Activated CD8-positive, alpha-beta T cell treated with anti-CD3 and anti-CD28 coated beads, Interleukin-2, amount 10 ng/mL, durations not matched to agents 7 days and 5 days (primary cell): ENCODE measurements at regions of chr5 and their contacts with region 1.

Region 1: GRCh38 chr5:87780831-87781760 is 368.4 kb upstream of the CCNH start:
- DNase-seq: peak; percentile 85
- ATAC-seq: peak; percentile 100
- H3K4me3 Mint-ChIP-seq: no peak overlapping the region
- H3K27ac Mint-ChIP-seq: no peak overlapping the region
- H3K4me1 Mint-ChIP-seq: no peaks in the 10 kb centered on the region
- H3K27me3 Mint-ChIP-seq: peaks cover 7% of the 10 kb centered on the region

Region 2: DNA sequence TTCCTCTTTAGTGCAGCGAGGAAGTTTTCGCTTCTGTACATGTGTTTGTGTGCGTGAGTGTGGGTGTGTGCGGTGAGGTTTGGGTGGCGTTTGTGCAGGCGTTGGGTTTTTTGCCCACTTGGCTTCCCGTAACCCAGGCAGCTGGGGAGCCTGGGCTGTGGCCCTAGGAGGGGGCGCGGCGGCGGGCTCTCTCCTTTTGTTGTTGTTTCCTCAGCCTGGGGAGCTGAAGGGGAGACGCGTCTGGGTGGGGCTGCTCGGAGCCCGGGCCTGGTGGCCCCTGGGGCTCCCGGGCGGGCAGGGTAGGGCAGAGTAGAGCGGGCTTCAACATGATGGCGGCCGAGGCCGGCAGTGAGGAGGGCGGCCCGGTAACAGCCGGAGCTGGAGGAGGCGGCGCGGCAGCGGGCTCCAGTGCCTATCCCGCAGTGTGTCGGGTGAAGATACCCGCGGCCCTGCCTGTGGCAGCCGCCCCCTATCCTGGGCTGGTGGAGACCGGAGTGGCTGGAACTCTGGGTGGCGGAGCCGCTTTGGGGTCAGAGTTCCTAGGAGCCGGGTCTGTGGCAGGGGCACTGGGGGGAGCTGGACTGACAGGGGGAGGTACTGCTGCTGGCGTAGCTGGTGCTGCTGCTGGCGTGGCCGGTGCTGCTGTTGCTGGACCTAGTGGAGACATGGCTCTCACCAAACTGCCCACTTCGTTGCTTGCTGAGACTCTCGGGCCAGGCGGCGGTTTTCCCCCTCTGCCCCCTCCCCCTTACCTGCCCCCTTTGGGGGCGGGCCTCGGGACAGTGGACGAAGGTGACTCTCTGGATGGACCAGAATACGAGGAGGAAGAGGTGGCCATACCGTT is 512.7 kb before region 1 on chr5:
- CTCF ChIA-PET with region 1: no interaction called
- POLR2A ChIA-PET with region 1: no interaction called
- DNase-seq: peak; percentile 78
- ATAC-seq: peak; percentile 78
- H3K4me3 Mint-ChIP-seq: peak overlapping the region; percentile 98
- H3K27ac Mint-ChIP-seq: peak overlapping the region; percentile 94
- H3K4me1 Mint-ChIP-seq: peaks cover 32% of the 10 kb centered on the region
- H3K27me3 Mint-ChIP-seq: no peaks in the 10 kb centered on the region

Region 3: GRCh38 chr5:87997662-87998061 is 216.6 kb after region 1 on chr5:
- CTCF ChIA-PET with region 1: no interaction called
- POLR2A ChIA-PET with region 1: no interaction called
- DNase-seq: no peak
- ATAC-seq: no peak
- H3K4me3 Mint-ChIP-seq: no peak overlapping the region
- H3K27ac Mint-ChIP-seq: no peak overlapping the region
- H3K4me1 Mint-ChIP-seq: no peaks in the 10 kb centered on the region
- H3K27me3 Mint-ChIP-seq: no peaks in the 10 kb centered on the region

Region 4: DNA sequence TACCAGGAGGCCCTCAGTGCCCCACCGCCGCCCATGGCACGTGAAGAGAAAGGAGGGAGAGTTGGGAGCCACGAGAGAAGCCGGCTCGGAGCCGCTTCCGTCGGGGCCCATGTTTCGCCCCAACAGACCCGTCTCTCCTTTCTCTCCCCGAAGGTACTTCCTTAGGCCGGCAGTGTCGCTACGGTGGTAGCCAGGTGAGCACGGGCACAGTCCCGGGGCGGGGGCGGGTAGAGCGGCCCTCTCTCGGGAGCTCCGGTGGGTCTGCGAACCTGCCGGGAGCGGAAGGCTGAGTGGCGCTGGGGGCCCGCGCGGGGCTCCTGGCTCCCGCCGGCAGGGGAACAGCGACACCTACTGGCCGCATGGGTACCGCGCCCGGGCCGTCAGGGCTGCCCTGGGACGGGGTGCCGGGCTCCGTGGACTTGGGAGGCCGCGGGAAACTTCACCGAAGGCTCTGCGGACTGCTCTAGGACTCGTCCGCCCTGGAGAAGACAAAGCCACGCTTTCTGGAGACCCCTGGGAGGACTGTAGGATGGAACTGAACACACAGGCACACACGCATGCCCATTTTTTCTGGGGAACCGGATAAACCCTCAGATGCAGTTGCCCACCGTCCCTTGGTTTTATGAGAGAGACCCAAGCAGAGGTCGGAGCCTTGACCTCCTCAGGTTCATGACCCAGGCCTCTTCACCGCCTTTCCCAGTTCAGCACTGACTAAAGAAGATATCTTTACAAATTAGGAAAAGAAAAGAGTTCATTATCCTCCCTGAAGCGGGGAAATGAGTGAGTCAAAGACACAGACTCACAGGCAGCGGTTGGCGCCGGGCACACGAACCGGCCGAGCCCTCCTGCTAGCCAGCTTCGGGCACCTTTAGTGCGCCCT is 899.4 kb after region 1 on chr5:
- CTCF ChIA-PET with region 1: interaction called, 23 read pairs
- POLR2A ChIA-PET with region 1: no interaction called
- DNase-seq: peak; percentile 83
- ATAC-seq: peak; percentile 95
- H3K4me3 Mint-ChIP-seq: peak overlapping the region; percentile 31
- H3K27ac Mint-ChIP-seq: no peak overlapping the region
- H3K4me1 Mint-ChIP-seq: peaks cover 24% of the 10 kb centered on the region
- H3K27me3 Mint-ChIP-seq: peaks cover 71% of the 10 kb centered on the region

Region 5: GRCh38 chr5:88690409-88691229 is 909.5 kb after region 1 on chr5:
- CTCF ChIA-PET with region 1: interaction called, 52 read pairs
- POLR2A ChIA-PET with region 1: no interaction called
- DNase-seq: peak; percentile 75
- ATAC-seq: peak; percentile 79
- H3K4me3 Mint-ChIP-seq: peak overlapping the region; percentile 53
- H3K27ac Mint-ChIP-seq: peak overlapping the region; percentile 80
- H3K4me1 Mint-ChIP-seq: peaks cover 10% of the 10 kb centered on the region
- H3K27me3 Mint-ChIP-seq: peaks cover 88% of the 10 kb centered on the region

Region 6: GRCh38 chr5:88698290-88698689 is 917.2 kb after region 1 on chr5:
- CTCF ChIA-PET with region 1: interaction called, 52 read pairs
- POLR2A ChIA-PET with region 1: interaction called, 3 read pairs
- DNase-seq: no peak
- ATAC-seq: no peak
- H3K4me3 Mint-ChIP-seq: no peak overlapping the region
- H3K27ac Mint-ChIP-seq: no peak overlapping the region
- H3K4me1 Mint-ChIP-seq: no peaks in the 10 kb centered on the region
- H3K27me3 Mint-ChIP-seq: peaks cover 54% of the 10 kb centered on the region

Region 7: GRCh38 chr5:88724201-88724600 is 943.1 kb after region 1 on chr5:
- CTCF ChIA-PET with region 1: interaction called, 11 read pairs
- POLR2A ChIA-PET with region 1: no interaction called
- DNase-seq: no peak
- ATAC-seq: no peak
- H3K4me3 Mint-ChIP-seq: no peak overlapping the region
- H3K27ac Mint-ChIP-seq: no peak overlapping the region
- H3K4me1 Mint-ChIP-seq: no peaks in the 10 kb centered on the region
- H3K27me3 Mint-ChIP-seq: peaks cover 6% of the 10 kb centered on the region

Region 8: GRCh38 chr5:88729084-88729828 is 948.2 kb after region 1 on chr5:
- CTCF ChIA-PET with region 1: interaction called, 11 read pairs
- POLR2A ChIA-PET with region 1: no interaction called
- DNase-seq: peak; percentile 74
- ATAC-seq: peak; percentile 75
- H3K4me3 Mint-ChIP-seq: no peak overlapping the region
- H3K27ac Mint-ChIP-seq: no peak overlapping the region
- H3K4me1 Mint-ChIP-seq: peaks cover 5% of the 10 kb centered on the region
- H3K27me3 Mint-ChIP-seq: peaks cover 7% of the 10 kb centered on the region